ENCODE measurements at regions of chr1 and their contacts with region 1.

Region 1: GRCh38 chr1:205626216-205626615 is 5.6 kb downstream of the ELK4 start:
- DNase-seq: no peak
- ATAC-seq: no peak
- H3K4me3 ChIP-seq: no peak overlapping the region
- H3K27ac ChIP-seq: no peak overlapping the region
- H3K4me1 ChIP-seq: peaks cover 12% of the 10 kb centered on the region
- H3K27me3 ChIP-seq: no peaks in the 10 kb centered on the region
- CTCF ChIP-seq: no peak

Region 2: GRCh38 chr1:204670152-204670927 is 955.9 kb before region 1 on chr1:
- CTCF ChIA-PET with region 1: no interaction called
- POLR2A ChIA-PET with region 1: no interaction called
- in situ Hi-C with region 1: no loop called
- intact Hi-C with region 1: no loop called
- DNase-seq: no peak
- ATAC-seq: no peak
- H3K4me3 ChIP-seq: no peak overlapping the region
- H3K27ac ChIP-seq: no peak overlapping the region
- H3K4me1 ChIP-seq: no peaks in the 10 kb centered on the region
- H3K27me3 ChIP-seq: peaks cover 2% of the 10 kb centered on the region
- CTCF ChIP-seq: no peak

Region 3: GRCh38 chr1:205568469-205569361 is 57.5 kb before region 1 on chr1:
- CTCF ChIA-PET with region 1: no interaction called
- POLR2A ChIA-PET with region 1: no interaction called
- in situ Hi-C with region 1: no loop called
- intact Hi-C with region 1: no loop called
- DNase-seq: no peak
- ATAC-seq: peak; percentile 62
- H3K4me3 ChIP-seq: no peak overlapping the region
- H3K27ac ChIP-seq: no peak overlapping the region
- H3K4me1 ChIP-seq: no peaks in the 10 kb centered on the region; the same call in 1 of the 2 replicates
- H3K27me3 ChIP-seq: peaks cover 38% of the 10 kb centered on the region
- CTCF ChIP-seq: no peak; the same call in 1 of the 2 replicates

Region 4: DNA sequence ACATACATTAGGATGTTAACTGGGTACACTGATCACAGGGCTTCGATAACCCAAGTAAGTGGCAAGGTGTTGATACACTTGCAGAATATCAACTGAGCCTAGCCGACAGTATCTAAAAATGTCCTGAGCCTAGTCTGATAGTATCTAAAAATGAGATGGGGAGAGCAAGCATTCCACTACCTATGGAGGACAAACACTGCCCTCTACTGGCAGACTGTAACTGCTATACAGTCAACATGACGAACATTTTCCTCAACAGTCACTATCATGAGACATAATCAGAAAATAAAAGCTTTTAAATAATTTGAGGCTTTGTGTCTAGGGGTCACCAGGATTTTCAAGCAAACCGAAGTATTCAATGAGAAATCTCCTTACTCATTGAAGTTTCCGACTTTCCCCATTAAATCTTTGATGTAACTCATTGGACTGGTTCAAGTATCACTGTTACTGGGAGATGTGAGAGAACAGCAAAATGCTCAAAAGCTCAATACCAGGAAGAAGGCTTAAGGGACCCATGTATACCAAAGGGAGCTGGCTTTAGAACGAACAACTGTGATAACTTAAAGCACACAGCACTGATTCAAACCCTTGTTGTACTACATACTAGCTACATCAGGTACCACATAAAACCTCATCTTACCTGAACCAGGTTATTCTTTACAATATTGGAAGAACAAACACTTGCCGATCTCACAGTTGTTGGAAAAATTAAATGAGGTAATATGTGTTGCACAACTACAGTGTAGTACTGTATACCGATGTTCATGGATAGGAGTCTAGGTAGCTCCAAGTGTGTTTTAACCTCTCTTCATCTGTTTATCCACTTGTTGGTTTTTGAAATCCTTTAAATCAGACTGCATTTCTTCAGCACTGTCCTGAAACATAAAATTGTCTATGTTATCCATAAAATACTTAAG is 85.1 kb after region 1 on chr1:
- CTCF ChIA-PET with region 1: interaction called, 10 read pairs
- POLR2A ChIA-PET with region 1: no interaction called
- in situ Hi-C with region 1: no loop called
- intact Hi-C with region 1: no loop called
- DNase-seq: peak; percentile 70
- ATAC-seq: peak; percentile 89
- H3K4me3 ChIP-seq: no peak overlapping the region
- H3K27ac ChIP-seq: peak overlapping the region; percentile 23; the same call in 1 of the 2 replicates
- H3K4me1 ChIP-seq: peaks cover 6% of the 10 kb centered on the region; the same call in 1 of the 2 replicates
- H3K27me3 ChIP-seq: no peaks in the 10 kb centered on the region
- CTCF ChIP-seq: peak; percentile 87

Region 5: GRCh38 chr1:205751036-205751651 is 124.9 kb after region 1 on chr1:
- CTCF ChIA-PET with region 1: no interaction called
- POLR2A ChIA-PET with region 1: no interaction called
- in situ Hi-C with region 1: no loop called
- intact Hi-C with region 1: no loop called
- DNase-seq: no peak
- ATAC-seq: no peak
- H3K4me3 ChIP-seq: no peak overlapping the region
- H3K27ac ChIP-seq: peak overlapping the region; percentile 98
- H3K4me1 ChIP-seq: peaks cover 15% of the 10 kb centered on the region
- H3K27me3 ChIP-seq: no peaks in the 10 kb centered on the region
- CTCF ChIP-seq: no peak

Region 6: DNA sequence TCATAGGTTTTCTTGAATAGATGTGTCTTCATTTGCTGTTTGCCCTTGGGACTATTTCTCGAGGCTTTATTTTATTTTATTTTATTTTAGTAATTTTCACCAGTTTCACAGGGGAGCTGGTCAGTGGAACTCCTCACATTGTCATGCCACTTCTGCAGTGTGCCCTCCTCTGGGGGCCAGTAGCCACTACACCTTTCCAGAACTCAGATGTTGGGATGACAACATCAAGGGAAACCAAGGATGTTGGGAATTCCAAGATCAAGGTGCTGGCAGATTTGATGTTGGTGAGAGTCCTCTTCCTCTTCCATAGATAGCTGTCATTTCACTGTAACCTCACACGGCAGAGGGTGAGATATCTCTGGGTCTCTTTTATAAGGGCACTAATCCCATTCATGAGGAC is 281.6 kb after region 1 on chr1:
- CTCF ChIA-PET with region 1: no interaction called
- POLR2A ChIA-PET with region 1: no interaction called
- in situ Hi-C with region 1: no loop called
- intact Hi-C with region 1: no loop called
- DNase-seq: no peak
- ATAC-seq: peak; percentile 85
- H3K4me3 ChIP-seq: no peak overlapping the region
- H3K27ac ChIP-seq: no peak overlapping the region
- H3K4me1 ChIP-seq: no peaks in the 10 kb centered on the region
- H3K27me3 ChIP-seq: peaks cover 2% of the 10 kb centered on the region; the same call in 1 of the 2 replicates
- CTCF ChIP-seq: peak; percentile 82

Measured in Panc1 (cell line).